ENCODE measurements at regions of chr20 and their contacts with region 1.

Region 1: GRCh38 chr20:9978397-9979004 is 56.3 kb upstream of the ANKEF1 start:
- DNase-seq: peak in 3 of 4 experiments; percentile 6 to 64 (median 18)
- ATAC-seq: peak; percentile 76
- H3K4me3 ChIP-seq: no peak overlapping the region
- H3K27ac ChIP-seq: no peak overlapping the region
- H3K4me1 ChIP-seq: no peaks in the 10 kb centered on the region
- H3K27me3 ChIP-seq: no peaks in the 10 kb centered on the region
- CTCF ChIP-seq: peak; percentile 58 to 68 (median 60)
- EP300 ChIP-seq: no peak
- POLR2A ChIP-seq: no peak
- RAD21 ChIP-seq: peak; percentile 75 to 89

Region 2: GRCh38 chr20:9699181-9699580 is 279.3 kb before region 1 on chr20:
- CTCF ChIA-PET with region 1: no interaction called
- POLR2A ChIA-PET with region 1: no interaction called
- in situ Hi-C with region 1: no loop called
- intact Hi-C with region 1: no loop called
- DNase-seq: no peak
- ATAC-seq: no peak
- H3K4me3 ChIP-seq: no peak overlapping the region
- H3K27ac ChIP-seq: no peak overlapping the region
- H3K4me1 ChIP-seq: no peaks in the 10 kb centered on the region
- H3K27me3 ChIP-seq: no peaks in the 10 kb centered on the region
- CTCF ChIP-seq: no peak
- EP300 ChIP-seq: no peak
- POLR2A ChIP-seq: no peak
- RAD21 ChIP-seq: no peak

Region 3: GRCh38 chr20:9867196-9867980 is 111.1 kb before region 1 on chr20:
- CTCF ChIA-PET with region 1: no interaction called
- POLR2A ChIA-PET with region 1: no interaction called
- in situ Hi-C with region 1: no loop called
- intact Hi-C with region 1: no loop called
- DNase-seq: no peak
- ATAC-seq: no peak
- H3K4me3 ChIP-seq: no peak overlapping the region
- H3K27ac ChIP-seq: no peak overlapping the region
- H3K4me1 ChIP-seq: no peaks in the 10 kb centered on the region
- H3K27me3 ChIP-seq: no peaks in the 10 kb centered on the region
- CTCF ChIP-seq: no peak
- EP300 ChIP-seq: no peak
- POLR2A ChIP-seq: no peak
- RAD21 ChIP-seq: no peak

Region 4: GRCh38 chr20:10090588-10091166 is 112.2 kb after region 1 on chr20:
- CTCF ChIA-PET with region 1: interaction called, 10 read pairs
- POLR2A ChIA-PET with region 1: no interaction called
- in situ Hi-C with region 1: no loop called
- intact Hi-C with region 1: loop called (anchors 1 kb)
- DNase-seq: peak; percentile 11 to 43 (median 16)
- ATAC-seq: peak; percentile 83
- H3K4me3 ChIP-seq: no peak overlapping the region
- H3K27ac ChIP-seq: no peak overlapping the region
- H3K4me1 ChIP-seq: no peaks in the 10 kb centered on the region
- H3K27me3 ChIP-seq: no peaks in the 10 kb centered on the region
- CTCF ChIP-seq: peak; percentile 49 to 56 (median 51)
- EP300 ChIP-seq: no peak
- POLR2A ChIP-seq: no peak
- RAD21 ChIP-seq: peak; percentile 38 to 66; a peak in 3 of 4 replicates

Region 5: DNA sequence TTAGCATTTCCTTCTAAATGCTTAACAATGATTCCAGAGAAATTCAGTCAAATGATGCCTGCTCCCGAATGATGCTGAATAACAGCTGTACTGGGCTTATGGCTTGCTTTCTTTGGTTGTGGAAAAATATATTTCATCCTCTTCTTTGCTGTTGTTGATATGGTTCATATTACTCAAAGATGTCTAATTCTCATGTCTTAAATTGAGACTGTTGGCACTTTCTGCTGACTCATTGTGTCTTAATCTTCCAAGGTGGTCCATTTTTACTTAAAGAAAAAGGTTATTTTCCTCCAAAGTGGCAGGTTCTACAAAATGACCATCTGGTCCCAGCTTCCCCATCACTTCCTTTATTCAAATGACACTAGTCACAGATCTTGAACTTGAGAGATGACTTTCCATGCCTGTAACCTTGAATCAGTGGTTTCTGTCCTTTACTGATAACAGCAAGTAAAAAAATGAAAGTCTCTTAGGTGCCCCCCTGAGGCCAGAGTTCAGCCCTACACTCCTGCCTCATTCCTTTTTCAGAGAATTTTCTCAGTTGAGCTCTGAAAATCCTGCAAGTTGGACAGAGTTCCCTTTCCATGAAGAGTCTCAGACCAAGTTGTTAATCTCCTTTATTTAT is 247.0 kb after region 1 on chr20:
- CTCF ChIA-PET with region 1: no interaction called
- POLR2A ChIA-PET with region 1: no interaction called
- in situ Hi-C with region 1: no loop called
- intact Hi-C with region 1: loop called (anchors 1 kb)
- DNase-seq: peak; percentile 8 to 31 (median 18)
- ATAC-seq: peak; percentile 75
- H3K4me3 ChIP-seq: no peak overlapping the region
- H3K27ac ChIP-seq: no peak overlapping the region
- H3K4me1 ChIP-seq: no peaks in the 10 kb centered on the region
- H3K27me3 ChIP-seq: no peaks in the 10 kb centered on the region
- CTCF ChIP-seq: peak in 2 of 3 experiments; percentile 27 to 39; a peak in 2 of 6 replicates
- EP300 ChIP-seq: no peak
- POLR2A ChIP-seq: no peak
- RAD21 ChIP-seq: peak in 1 of 2 experiments; percentile 22; a peak in 1 of 4 replicates